Activated T-helper 1 cell treated with anti-CD3 and anti-CD28 coated beads, Interleukin-12 subunit alpha, Interleukin-12 subunit beta, Interleukin-2, Interleukin-4 antibody, amounts not matched to agents 30 ng/mL and 10 ng/mL and 1 ng/mL, durations not matched to agents 14 hours and 24 hours and 36 hours (primary cell): ENCODE measurements at regions of chr19 and their contacts with region 1.

Region 1: GRCh38 chr19:35822579-35822978 is 9.9 kb upstream of the PRODH2 start:
- DNase-seq: no peak
- H3K4me3 Mint-ChIP-seq: no peak overlapping the region
- H3K27ac Mint-ChIP-seq: no peak overlapping the region
- H3K4me1 Mint-ChIP-seq: no peaks in the 10 kb centered on the region
- H3K27me3 Mint-ChIP-seq: peaks cover 16% of the 10 kb centered on the region

Region 2: GRCh38 chr19:35693830-35694599 is 128.6 kb before region 1 on chr19:
- intact Hi-C with region 1: loop called (anchors 1 kb)
- DNase-seq: peak; percentile 86
- H3K4me3 Mint-ChIP-seq: no peak overlapping the region
- H3K27ac Mint-ChIP-seq: peak overlapping the region; percentile 38
- H3K4me1 Mint-ChIP-seq: peaks cover 27% of the 10 kb centered on the region
- H3K27me3 Mint-ChIP-seq: no peaks in the 10 kb centered on the region

Region 3: DNA sequence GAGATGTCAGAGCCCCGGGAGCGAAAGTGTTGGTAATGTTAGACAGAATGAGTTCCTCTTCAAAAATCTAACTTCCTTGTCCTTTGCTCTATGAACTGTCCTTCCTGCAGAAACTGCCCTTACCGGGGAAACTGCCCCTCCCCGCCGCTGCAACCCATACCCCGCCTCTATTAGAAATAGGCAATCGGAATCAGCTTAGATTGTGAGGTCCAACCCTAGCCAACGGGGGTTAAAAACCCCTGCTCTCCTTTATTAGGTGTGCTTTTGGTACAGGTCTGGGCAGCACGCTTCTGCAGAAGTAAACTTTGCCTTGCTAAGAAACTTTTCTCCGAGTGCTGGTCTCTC is 305.8 kb after region 1 on chr19:
- intact Hi-C with region 1: no loop called
- DNase-seq: no peak
- H3K4me3 Mint-ChIP-seq: peak overlapping the region; percentile 83
- H3K27ac Mint-ChIP-seq: peak overlapping the region; percentile 95
- H3K4me1 Mint-ChIP-seq: peaks cover 24% of the 10 kb centered on the region
- H3K27me3 Mint-ChIP-seq: no peaks in the 10 kb centered on the region